ENCODE measurements at regions of chr15 and their contacts with region 1.

Region 1: DNA sequence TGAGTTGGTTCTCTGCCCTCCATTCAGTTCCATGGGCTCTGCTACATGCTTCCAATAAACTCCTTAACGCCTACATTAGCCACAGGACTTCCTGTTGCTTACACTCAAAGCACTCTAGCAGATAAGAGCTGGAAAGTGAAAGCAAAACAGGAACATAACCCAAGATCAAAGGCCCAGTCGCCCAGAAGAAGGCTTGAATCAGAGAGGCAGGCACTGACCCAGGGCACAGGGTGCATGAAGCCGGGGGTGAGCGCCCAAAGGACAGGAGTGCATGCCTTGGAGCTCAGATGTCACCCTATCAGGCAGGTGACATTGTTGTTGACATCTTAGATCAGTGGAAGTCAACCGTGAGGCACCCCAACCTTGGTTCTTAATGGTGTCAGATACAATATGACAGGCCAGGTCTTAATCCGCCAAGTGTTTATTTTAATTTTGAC is 235.1 kb downstream of the UACA start:
- DNase-seq: peak; percentile 29 to 80 (median 59)
- ATAC-seq: peak; percentile 91 to 93
- H3K4me3 Mint-ChIP-seq: peak overlapping the region; percentile 75 to 86 (median 80)
- H3K27ac Mint-ChIP-seq: peak overlapping the region; percentile 94 to 99 (median 97)
- H3K4me1 Mint-ChIP-seq: peaks cover 52 to 95% (median 77%) of the 10 kb centered on the region in 4 donors
- H3K27me3 Mint-ChIP-seq: no peaks in the 10 kb centered on the region

Region 2: GRCh38 chr15:70451821-70452653 is 76.3 kb before region 1 on chr15:
- POLR2A ChIA-PET with region 1: no interaction called
- DNase-seq: peak in 6 of 10 donors; percentile 13 to 37 (median 22)
- ATAC-seq: peak; percentile 48 to 49
- H3K4me3 Mint-ChIP-seq: peak overlapping the region; percentile 4 to 67 (median 48)
- H3K27ac Mint-ChIP-seq: peak overlapping the region in 7 of 10 donors; percentile 10 to 48 (median 29)
- H3K4me1 Mint-ChIP-seq: peaks cover 33 to 52% (median 46%) of the 10 kb centered on the region in 4 donors
- H3K27me3 Mint-ChIP-seq: peaks cover 0 to 7% (median 2%) of the 10 kb centered on the region in 5 donors

Region 3: GRCh38 chr15:70466895-70467529 is 61.3 kb before region 1 on chr15:
- POLR2A ChIA-PET with region 1: no interaction called
- DNase-seq: peak in 7 of 10 donors; percentile 35 to 77 (median 51)
- ATAC-seq: peak; percentile 92 to 94
- H3K4me3 Mint-ChIP-seq: no peak overlapping the region
- H3K27ac Mint-ChIP-seq: no peak overlapping the region
- H3K4me1 Mint-ChIP-seq: peaks cover 5 to 10% (median 7%) of the 10 kb centered on the region in 4 donors
- H3K27me3 Mint-ChIP-seq: peaks cover 0 to 12% (median 4%) of the 10 kb centered on the region in 5 donors

Region 4: GRCh38 chr15:70492240-70493177 is 35.8 kb before region 1 on chr15:
- POLR2A ChIA-PET with region 1: interaction called, 24 read pairs
- DNase-seq: peak; percentile 37 to 89 (median 77)
- ATAC-seq: peak; percentile 78 to 90
- H3K4me3 Mint-ChIP-seq: peak overlapping the region; percentile 61 to 90 (median 76)
- H3K27ac Mint-ChIP-seq: peak overlapping the region; percentile 9 to 92 (median 78)
- H3K4me1 Mint-ChIP-seq: peaks cover 59 to 87% (median 82%) of the 10 kb centered on the region in 4 donors
- H3K27me3 Mint-ChIP-seq: peaks cover 0 to 6% (median 0%) of the 10 kb centered on the region in 5 donors

Region 5: GRCh38 chr15:70504299-70504951 is 23.9 kb before region 1 on chr15:
- POLR2A ChIA-PET with region 1: interaction called, 16 read pairs
- DNase-seq: no peak
- ATAC-seq: peak; percentile 58 to 61
- H3K4me3 Mint-ChIP-seq: peak overlapping the region; percentile 22 to 85 (median 64)
- H3K27ac Mint-ChIP-seq: peak overlapping the region in 4 of 10 donors; percentile 22 to 82 (median 74)
- H3K4me1 Mint-ChIP-seq: peaks cover 23 to 66% (median 52%) of the 10 kb centered on the region in 4 donors
- H3K27me3 Mint-ChIP-seq: no peaks in the 10 kb centered on the region

Region 6: DNA sequence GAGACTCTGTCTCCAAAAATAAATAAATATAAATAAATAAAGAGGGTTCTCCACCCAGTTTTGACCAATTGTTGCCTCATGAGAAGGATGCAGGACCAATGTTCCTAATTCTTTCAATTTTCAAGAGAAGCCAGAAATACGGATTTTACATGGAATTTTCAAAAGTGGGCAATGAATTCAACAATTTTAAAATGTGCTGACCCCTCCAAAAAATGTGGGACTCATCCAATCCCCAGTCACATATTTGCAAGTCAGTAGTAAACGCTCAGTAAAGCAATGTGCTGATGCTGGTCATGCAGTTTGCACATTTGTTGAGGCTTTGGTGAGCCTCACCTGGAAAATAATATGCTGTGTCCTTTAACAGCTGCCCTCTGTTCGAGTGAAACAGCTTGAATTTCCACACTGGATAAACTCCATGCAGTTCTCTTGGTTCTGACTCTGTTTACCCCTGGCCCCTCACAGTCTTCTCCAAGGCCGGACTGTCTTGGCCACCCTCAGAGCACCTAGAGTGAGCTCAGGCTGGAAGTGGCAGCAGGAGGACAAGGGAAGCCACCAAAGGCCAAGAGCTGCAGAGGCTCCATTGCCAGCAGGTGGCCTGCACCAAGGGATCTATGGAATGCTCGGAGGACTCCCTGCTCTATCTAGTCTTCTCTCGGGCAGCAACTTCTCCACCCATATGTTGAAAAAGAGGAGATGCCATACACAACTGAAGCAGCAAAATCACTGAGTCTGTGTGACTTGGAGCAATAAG is 11.7 kb before region 1 on chr15:
- POLR2A ChIA-PET with region 1: no interaction called
- DNase-seq: no peak
- ATAC-seq: no peak
- H3K4me3 Mint-ChIP-seq: no peak overlapping the region
- H3K27ac Mint-ChIP-seq: peak overlapping the region in 1 of 10 donors; percentile 12
- H3K4me1 Mint-ChIP-seq: peaks cover 3 to 20% (median 9%) of the 10 kb centered on the region in 4 donors
- H3K27me3 Mint-ChIP-seq: peaks cover 0 to 1% (median 0%) of the 10 kb centered on the region in 5 donors

Region 7: GRCh38 chr15:70559265-70560239 is 31.3 kb after region 1 on chr15:
- POLR2A ChIA-PET with region 1: interaction called, 55 read pairs
- DNase-seq: peak; percentile 37 to 87 (median 70)
- ATAC-seq: peak; percentile 88 to 90
- H3K4me3 Mint-ChIP-seq: no peak overlapping the region
- H3K27ac Mint-ChIP-seq: no peak overlapping the region
- H3K4me1 Mint-ChIP-seq: peaks cover 0 to 29% (median 15%) of the 10 kb centered on the region in 4 donors
- H3K27me3 Mint-ChIP-seq: peaks cover 0 to 4% (median 0%) of the 10 kb centered on the region in 5 donors

Measured in naive thymus-derived CD8-positive, alpha-beta T cell (primary cell).